ENCODE measurements at regions of chr2 and their contacts with region 1.

Region 1: DNA sequence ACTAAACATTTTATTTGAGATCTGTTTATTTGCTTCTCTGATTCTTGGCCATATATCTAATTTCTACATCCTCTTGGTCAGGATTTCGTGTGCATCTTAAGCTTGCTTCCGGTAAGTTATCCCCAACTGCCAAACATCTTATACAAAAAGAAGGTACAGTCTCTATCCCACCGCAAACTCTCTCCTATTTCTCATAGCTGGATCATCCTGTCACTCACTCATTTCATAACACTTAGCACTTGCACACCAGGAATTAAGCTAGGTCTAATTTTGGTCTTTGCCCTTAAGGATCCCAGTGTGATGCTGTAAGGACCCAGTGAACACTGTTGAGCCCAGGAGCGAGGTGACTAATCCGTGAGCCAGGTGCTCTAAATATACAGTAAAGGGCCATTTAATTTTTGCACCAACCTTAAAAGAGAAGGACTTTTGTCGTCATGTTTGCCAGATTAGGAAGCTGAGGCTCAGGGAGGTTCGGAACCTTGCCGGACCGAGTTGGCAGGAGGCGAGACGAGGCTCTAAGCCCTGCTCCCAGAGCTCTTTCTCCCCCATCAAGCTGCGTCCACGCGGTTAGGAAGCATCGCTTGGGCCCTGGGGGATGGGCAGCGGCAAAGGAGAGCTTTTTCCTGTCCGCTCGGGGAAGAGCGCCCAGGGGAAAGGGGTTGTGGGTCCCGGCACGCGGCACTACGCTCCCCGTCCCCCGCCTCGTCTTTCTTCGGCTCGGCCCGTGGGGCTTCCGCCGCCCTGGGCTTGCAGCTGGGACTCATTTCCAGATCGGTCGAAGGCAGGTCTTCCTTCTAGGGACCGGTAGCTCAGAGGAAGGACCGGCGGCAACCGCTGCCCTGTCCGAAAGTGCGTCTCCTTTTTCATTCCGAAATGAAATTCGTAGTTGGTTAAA is 4.1 kb upstream of the ITPRIPL1 start:
- DNase-seq: no peak
- ATAC-seq: peak; percentile 24
- H3K4me3 ChIP-seq: peak overlapping the region; percentile 61 to 74 (median 67)
- H3K27ac ChIP-seq: no peak overlapping the region
- H3K4me1 ChIP-seq: peaks cover 64% of the 10 kb centered on the region
- H3K27me3 ChIP-seq: peaks cover 7 to 29% of the 10 kb centered on the region in 2 experiments; a peak in 4 of 5 replicates
- CTCF ChIP-seq: no peak
- EP300 ChIP-seq: no peak
- POLR2A ChIP-seq: no peak
- RAD21 ChIP-seq: no peak

Region 2: GRCh38 chr2:96336104-96336775 is 15.3 kb after region 1 on chr2:
- CTCF ChIA-PET with region 1: no interaction called
- POLR2A ChIA-PET with region 1: interaction called, 43 read pairs
- in situ Hi-C with region 1: no loop called
- intact Hi-C with region 1: no loop called
- DNase-seq: no peak
- ATAC-seq: peak; percentile 28
- H3K4me3 ChIP-seq: peak overlapping the region; percentile 74 to 85 (median 81)
- H3K27ac ChIP-seq: peak overlapping the region; percentile 84
- H3K4me1 ChIP-seq: peaks cover 32% of the 10 kb centered on the region
- H3K27me3 ChIP-seq: no peaks in the 10 kb centered on the region; a peak in 1 of 5 replicates
- CTCF ChIP-seq: no peak
- EP300 ChIP-seq: no peak
- POLR2A ChIP-seq: peak; percentile 25 to 73
- RAD21 ChIP-seq: no peak

Region 3: DNA sequence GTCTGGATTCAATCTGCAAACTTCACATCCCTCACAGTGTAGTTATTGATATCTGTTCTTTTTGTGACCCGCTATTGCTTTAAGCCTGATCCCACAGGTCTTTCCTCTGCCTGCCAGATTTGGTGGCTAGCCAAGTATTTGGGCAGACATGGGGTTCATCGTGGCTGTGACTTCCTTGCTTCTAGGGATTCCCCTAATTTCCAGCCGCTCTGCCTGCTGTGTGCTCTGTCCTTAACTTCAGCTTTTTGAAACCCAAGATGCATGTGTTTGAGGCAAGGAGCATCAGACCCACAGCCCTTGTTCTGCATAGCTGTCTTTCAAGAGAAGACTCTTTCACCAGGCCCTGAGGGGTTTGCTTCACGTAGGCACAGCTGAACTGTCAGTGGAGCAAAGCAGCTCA is 68.8 kb after region 1 on chr2:
- CTCF ChIA-PET with region 1: no interaction called
- POLR2A ChIA-PET with region 1: no interaction called
- in situ Hi-C with region 1: no loop called
- intact Hi-C with region 1: no loop called
- DNase-seq: no peak
- ATAC-seq: no peak
- H3K4me3 ChIP-seq: no peak overlapping the region
- H3K27ac ChIP-seq: no peak overlapping the region
- H3K4me1 ChIP-seq: peaks cover 10% of the 10 kb centered on the region; the same call in 1 of the 2 replicates
- H3K27me3 ChIP-seq: peaks cover 0 to 17% of the 10 kb centered on the region in 2 experiments; a peak in 2 of 5 replicates
- CTCF ChIP-seq: no peak
- EP300 ChIP-seq: no peak
- POLR2A ChIP-seq: no peak
- RAD21 ChIP-seq: no peak